Naive thymus-derived CD4-positive, alpha-beta T cell (primary cell): ENCODE measurements at regions of chr6 and their contacts with region 1.

Region 1: GRCh38 chr6:2891768-2892170 is 11.3 kb downstream of the SERPINB9 start:
- DNase-seq: peak in 8 of 9 donors; percentile 31 to 93 (median 79)
- ATAC-seq: peak; percentile 88
- H3K4me3 ChIP-seq: peak overlapping the region; percentile 34
- H3K4me3 Mint-ChIP-seq: peak overlapping the region; percentile 58 to 81 (median 69)
- H3K27ac ChIP-seq: peak overlapping the region; percentile 69
- H3K27ac Mint-ChIP-seq: peak overlapping the region; percentile 13 to 96 (median 90)
- H3K4me1 ChIP-seq: peaks cover 0 to 18% of the 10 kb centered on the region in 2 donors
- H3K4me1 Mint-ChIP-seq: peaks cover 22 to 80% (median 68%) of the 10 kb centered on the region in 7 donors
- H3K27me3 ChIP-seq: no peaks in the 10 kb centered on the region
- H3K27me3 Mint-ChIP-seq: no peaks in the 10 kb centered on the region

Region 2: GRCh38 chr6:2688416-2689064 is 203.2 kb before region 1 on chr6:
- CTCF ChIA-PET with region 1: no interaction called
- POLR2A ChIA-PET with region 1: no interaction called
- intact Hi-C with region 1: no loop called
- DNase-seq: no peak
- ATAC-seq: peak; percentile 56
- H3K4me3 ChIP-seq: no peak overlapping the region
- H3K4me3 Mint-ChIP-seq: no peak overlapping the region
- H3K27ac ChIP-seq: no peak overlapping the region
- H3K27ac Mint-ChIP-seq: no peak overlapping the region
- H3K4me1 ChIP-seq: no peaks in the 10 kb centered on the region
- H3K4me1 Mint-ChIP-seq: no peaks in the 10 kb centered on the region
- H3K27me3 ChIP-seq: no peaks in the 10 kb centered on the region
- H3K27me3 Mint-ChIP-seq: peaks cover 0 to 2% (median 0%) of the 10 kb centered on the region in 5 donors

Region 3: DNA sequence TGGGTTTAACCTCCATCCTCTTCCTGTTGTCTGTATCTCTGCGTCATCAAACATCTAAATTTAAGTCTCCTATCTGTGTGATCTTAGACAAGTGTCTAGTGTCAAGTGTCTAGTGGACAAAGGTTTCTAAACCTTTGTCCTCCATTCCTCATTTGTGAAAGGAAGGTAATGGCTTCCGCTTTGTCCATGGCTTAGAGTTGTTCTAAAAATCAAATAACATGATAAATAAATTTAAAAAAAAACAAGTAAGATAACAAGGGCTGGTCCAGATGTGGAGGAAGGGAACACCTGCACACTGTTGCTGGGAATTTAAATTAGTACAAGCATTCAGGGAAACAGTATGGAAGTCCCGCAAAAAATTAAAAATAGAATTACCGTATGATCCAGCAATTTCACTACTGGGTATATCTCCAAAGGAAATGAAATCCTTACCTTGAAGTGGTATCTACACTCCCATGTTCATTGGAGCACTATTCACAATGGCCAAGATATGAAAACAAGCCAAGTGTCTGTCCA is 32.5 kb before region 1 on chr6:
- CTCF ChIA-PET with region 1: interaction called, 3 read pairs
- POLR2A ChIA-PET with region 1: interaction called, 27 read pairs
- intact Hi-C with region 1: loop called in 1 of 2 experiments (anchors 1 kb)
- DNase-seq: peak in 5 of 9 donors; percentile 78 to 84 (median 80)
- ATAC-seq: no peak
- H3K4me3 ChIP-seq: peak overlapping the region; percentile 56
- H3K4me3 Mint-ChIP-seq: peak overlapping the region; percentile 79 to 98 (median 88)
- H3K27ac ChIP-seq: peak overlapping the region; percentile 86
- H3K27ac Mint-ChIP-seq: peak overlapping the region; percentile 98 to 100 (median 99)
- H3K4me1 ChIP-seq: peaks cover 81 to 84% of the 10 kb centered on the region in 2 donors
- H3K4me1 Mint-ChIP-seq: peaks cover 66 to 95% (median 89%) of the 10 kb centered on the region in 7 donors
- H3K27me3 ChIP-seq: no peaks in the 10 kb centered on the region
- H3K27me3 Mint-ChIP-seq: no peaks in the 10 kb centered on the region

Region 4: DNA sequence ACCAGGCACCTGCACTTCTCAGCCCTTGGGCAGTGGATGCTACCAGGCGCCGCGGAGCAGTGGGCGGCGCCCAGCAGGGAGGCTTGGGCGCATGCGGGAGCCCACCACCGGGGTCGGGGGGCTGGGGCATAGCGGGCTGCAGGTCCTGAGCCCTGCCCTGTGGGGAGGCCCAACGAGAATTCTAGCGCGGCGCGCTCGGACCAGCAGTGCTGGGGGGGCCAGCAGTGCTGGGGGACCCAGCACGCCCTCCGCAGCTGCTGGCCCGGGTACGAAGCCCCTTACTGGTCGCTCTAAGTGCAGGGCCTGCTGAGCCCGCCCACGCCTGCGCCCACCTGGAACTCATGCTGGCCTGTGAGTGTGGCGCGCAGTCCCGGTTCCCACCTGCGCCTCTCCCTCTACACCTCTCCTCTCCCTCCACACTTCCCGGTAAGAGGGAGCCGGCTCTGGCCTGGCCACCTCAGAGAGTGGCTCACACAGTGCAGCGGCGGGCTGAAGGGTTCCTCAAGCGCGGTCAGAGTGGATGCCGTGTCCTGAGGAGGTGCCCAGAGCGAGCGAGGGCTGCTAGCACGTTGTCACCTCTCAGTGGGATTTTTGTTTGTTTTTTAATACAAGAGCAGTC is 21.6 kb before region 1 on chr6:
- CTCF ChIA-PET with region 1: interaction called, 3 read pairs
- POLR2A ChIA-PET with region 1: interaction called, 32 read pairs
- intact Hi-C with region 1: no loop called
- DNase-seq: no peak
- ATAC-seq: no peak
- H3K4me3 ChIP-seq: no peak overlapping the region
- H3K4me3 Mint-ChIP-seq: no peak overlapping the region
- H3K27ac ChIP-seq: no peak overlapping the region
- H3K27ac Mint-ChIP-seq: no peak overlapping the region
- H3K4me1 ChIP-seq: peaks cover 7 to 11% of the 10 kb centered on the region in 2 donors
- H3K4me1 Mint-ChIP-seq: peaks cover 16 to 60% (median 47%) of the 10 kb centered on the region in 7 donors
- H3K27me3 ChIP-seq: no peaks in the 10 kb centered on the region
- H3K27me3 Mint-ChIP-seq: no peaks in the 10 kb centered on the region

Region 5: GRCh38 chr6:2876210-2877056 is 15.3 kb before region 1 on chr6:
- CTCF ChIA-PET with region 1: interaction called, 5 read pairs
- POLR2A ChIA-PET with region 1: interaction called, 32 read pairs
- intact Hi-C with region 1: loop called in 1 of 2 experiments (anchors 1 kb)
- DNase-seq: no peak
- ATAC-seq: peak; percentile 38
- H3K4me3 ChIP-seq: peak overlapping the region; percentile 50
- H3K4me3 Mint-ChIP-seq: peak overlapping the region; percentile 79 to 87 (median 84)
- H3K27ac ChIP-seq: peak overlapping the region; percentile 71
- H3K27ac Mint-ChIP-seq: peak overlapping the region; percentile 82 to 98 (median 91)
- H3K4me1 ChIP-seq: peaks cover 54 to 55% of the 10 kb centered on the region in 2 donors
- H3K4me1 Mint-ChIP-seq: peaks cover 63 to 83% (median 79%) of the 10 kb centered on the region in 7 donors
- H3K27me3 ChIP-seq: no peaks in the 10 kb centered on the region
- H3K27me3 Mint-ChIP-seq: no peaks in the 10 kb centered on the region

Region 6: DNA sequence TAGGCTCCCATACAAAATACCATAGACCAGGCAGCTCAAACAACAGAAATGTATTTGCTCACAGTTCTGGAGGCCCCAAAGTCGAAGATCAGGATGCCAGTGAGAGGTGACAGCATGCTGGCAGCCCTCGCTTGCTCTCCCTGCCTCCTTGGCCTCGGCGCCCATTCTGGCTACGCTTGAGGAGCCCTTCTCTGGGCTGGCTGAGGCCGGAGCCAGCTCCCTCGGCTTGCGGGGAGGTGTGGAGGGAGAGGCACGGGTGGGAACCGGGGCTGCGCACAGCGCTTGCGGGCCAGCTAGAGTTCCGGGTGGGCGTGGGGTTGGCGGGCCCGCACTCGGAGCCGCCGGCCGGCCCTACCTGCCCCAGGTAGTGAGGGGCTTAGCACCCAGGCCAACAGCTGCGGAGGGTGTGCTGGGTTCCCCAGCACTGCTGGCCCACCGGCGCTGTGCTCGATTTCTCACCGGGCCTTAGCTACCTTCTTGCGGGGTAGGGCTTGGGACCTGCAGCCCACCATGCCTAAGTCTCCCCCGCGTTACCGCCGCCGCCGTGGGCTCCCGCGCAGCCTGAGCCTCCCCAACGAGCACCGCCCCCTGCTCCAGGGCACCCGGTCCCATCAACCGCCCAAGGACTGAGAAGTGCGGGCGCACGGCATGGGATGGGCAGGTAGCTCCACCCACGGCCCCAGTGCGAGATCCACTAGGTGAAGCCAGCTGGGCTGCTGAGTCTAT is 44.0 kb after region 1 on chr6:
- CTCF ChIA-PET with region 1: no interaction called
- POLR2A ChIA-PET with region 1: no interaction called
- intact Hi-C with region 1: no loop called
- DNase-seq: no peak
- ATAC-seq: no peak
- H3K4me3 ChIP-seq: no peak overlapping the region
- H3K4me3 Mint-ChIP-seq: peak overlapping the region in 4 of 10 donors; percentile 36 to 86 (median 66)
- H3K27ac ChIP-seq: no peak overlapping the region
- H3K27ac Mint-ChIP-seq: peak overlapping the region in 8 of 9 donors; percentile 49 to 99 (median 97)
- H3K4me1 ChIP-seq: peaks cover 17 to 49% of the 10 kb centered on the region in 2 donors
- H3K4me1 Mint-ChIP-seq: peaks cover 12 to 67% (median 51%) of the 10 kb centered on the region in 7 donors
- H3K27me3 ChIP-seq: no peaks in the 10 kb centered on the region
- H3K27me3 Mint-ChIP-seq: peaks cover 0 to 8% (median 0%) of the 10 kb centered on the region in 5 donors

Region 7: GRCh38 chr6:2952557-2953095 is 60.9 kb after region 1 on chr6:
- CTCF ChIA-PET with region 1: no interaction called
- POLR2A ChIA-PET with region 1: no interaction called
- intact Hi-C with region 1: no loop called
- DNase-seq: peak in 4 of 9 donors; percentile 10 to 61 (median 54)
- ATAC-seq: peak; percentile 96
- H3K4me3 ChIP-seq: no peak overlapping the region
- H3K4me3 Mint-ChIP-seq: peak overlapping the region in 3 of 10 donors; percentile 53 to 65 (median 64)
- H3K27ac ChIP-seq: no peak overlapping the region
- H3K27ac Mint-ChIP-seq: peak overlapping the region in 4 of 9 donors; percentile 34 to 87 (median 68)
- H3K4me1 ChIP-seq: peaks cover 0 to 2% of the 10 kb centered on the region in 2 donors
- H3K4me1 Mint-ChIP-seq: peaks cover 10 to 31% (median 16%) of the 10 kb centered on the region in 7 donors
- H3K27me3 ChIP-seq: no peaks in the 10 kb centered on the region
- H3K27me3 Mint-ChIP-seq: peaks cover 0 to 12% (median 0%) of the 10 kb centered on the region in 5 donors